Lower leg skin (tissue), 4 donors: ENCODE measurements at regions of chr2 and their contacts with region 1.

Region 1: GRCh38 chr2:128984081-128984480 is 665.4 kb upstream of the HS6ST1 start:
- DNase-seq: no peak
- H3K4me3 ChIP-seq: no peak overlapping the region
- CTCF ChIP-seq: no peak
- POLR2A ChIP-seq: no peak

Region 2: DNA sequence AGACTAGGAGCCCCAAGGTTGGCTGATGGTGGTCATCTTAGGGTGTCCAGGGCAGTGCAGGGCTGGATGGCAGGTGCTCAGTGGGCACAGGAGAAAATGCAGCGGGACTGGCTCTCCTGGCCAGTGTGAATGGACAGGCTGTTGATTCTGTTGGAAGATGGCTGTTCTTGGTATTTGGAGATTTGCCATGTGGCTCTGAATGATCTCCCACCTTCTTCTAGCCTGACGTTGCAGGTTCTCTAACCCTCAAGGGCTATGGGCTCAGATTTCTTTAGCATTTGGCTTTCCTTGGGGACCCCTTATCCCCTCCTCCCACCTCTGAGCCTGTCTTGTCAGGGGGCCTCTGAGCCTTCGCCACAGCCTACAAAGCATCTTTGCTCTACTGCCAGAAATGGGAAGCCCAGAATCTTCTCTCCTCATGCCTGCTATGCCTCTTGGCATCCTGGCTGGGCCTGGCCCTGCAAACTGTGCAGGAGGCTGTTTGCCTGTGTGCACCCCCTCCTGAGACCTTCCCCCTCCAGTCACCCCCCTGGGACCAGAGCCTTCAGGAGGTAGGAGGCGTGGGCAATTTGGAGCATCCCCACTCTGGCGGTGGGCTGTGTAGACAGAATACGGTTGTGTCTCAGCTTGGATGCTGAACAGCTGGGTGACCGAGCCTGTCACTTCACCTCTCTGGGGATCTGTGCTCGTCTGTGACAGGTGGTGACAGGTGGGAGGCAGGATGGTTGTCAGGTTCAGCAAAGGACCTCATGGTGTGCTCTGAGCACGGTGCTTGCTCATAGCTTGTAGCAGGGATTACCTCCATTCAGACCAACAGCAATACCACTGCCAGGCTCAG is 479.2 kb before region 1 on chr2:
- intact Hi-C with region 1: loop called (anchors 5 kb)
- DNase-seq: peak in 1 of 2 donors; percentile 52
- H3K4me3 ChIP-seq: no peak overlapping the region
- CTCF ChIP-seq: no peak
- POLR2A ChIP-seq: no peak

Region 3: GRCh38 chr2:128930101-128930500 is 54.0 kb before region 1 on chr2:
- intact Hi-C with region 1: no loop called
- DNase-seq: no peak
- H3K4me3 ChIP-seq: no peak overlapping the region
- CTCF ChIP-seq: no peak
- POLR2A ChIP-seq: no peak